ENCODE measurements at regions of chr3 and their contacts with region 1.

Region 1: DNA sequence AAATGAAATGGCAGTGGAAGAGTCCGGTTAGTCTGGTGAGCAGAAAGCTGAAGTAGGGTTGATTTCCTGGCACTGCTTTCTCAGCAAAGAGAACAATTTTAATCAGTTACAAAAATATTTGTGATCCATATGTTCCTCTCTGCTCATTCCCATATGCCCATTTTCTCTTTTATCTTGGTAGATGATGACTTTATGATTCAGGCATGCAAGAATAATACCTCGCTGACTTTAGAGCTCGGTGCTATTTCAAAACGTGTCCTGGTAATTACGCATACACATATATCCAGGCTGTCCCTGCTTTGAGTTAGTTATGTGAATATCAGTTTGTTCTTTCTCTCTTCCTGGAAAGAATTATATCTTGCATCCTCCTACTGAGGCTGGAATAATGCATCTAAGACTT is 38.5 kb downstream of the ARPP21 start:
- DNase-seq: no peak
- H3K4me3 ChIP-seq: no peak overlapping the region
- H3K27ac ChIP-seq: no peak overlapping the region
- H3K4me1 ChIP-seq: no peaks in the 10 kb centered on the region
- H3K27me3 ChIP-seq: peaks cover 0 to 5% of the 10 kb centered on the region in 2 donors
- CTCF ChIP-seq: no peak
- POLR2A ChIP-seq: no peak

Region 2: GRCh38 chr3:34405159-34405558 is 1272.6 kb before region 1 on chr3:
- intact Hi-C with region 1: loop called (anchors 5 kb)
- DNase-seq: no peak
- H3K4me3 ChIP-seq: no peak overlapping the region
- H3K27ac ChIP-seq: no peak overlapping the region
- H3K4me1 ChIP-seq: no peaks in the 10 kb centered on the region
- H3K27me3 ChIP-seq: no peaks in the 10 kb centered on the region
- CTCF ChIP-seq: no peak
- POLR2A ChIP-seq: no peak

Region 3: DNA sequence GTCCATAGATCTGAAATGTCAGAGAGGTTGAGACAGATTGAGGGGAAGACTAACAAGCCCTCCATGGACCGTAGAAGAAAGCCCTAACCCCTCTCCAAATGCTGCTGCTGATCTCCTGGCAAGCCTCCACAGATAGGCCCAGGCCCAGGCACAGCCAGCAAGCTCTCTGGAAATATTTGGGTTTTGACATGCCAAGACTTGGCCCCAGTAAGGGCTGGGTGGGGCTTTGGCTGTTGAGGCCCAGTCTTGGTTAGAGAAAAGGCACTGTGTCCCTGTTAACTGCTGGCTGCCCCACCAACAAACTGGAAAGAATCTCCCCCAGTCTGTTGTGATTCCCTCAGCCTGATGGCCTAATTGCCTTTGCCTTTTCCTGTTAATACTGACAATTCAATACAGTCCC is 1975.1 kb after region 1 on chr3:
- intact Hi-C with region 1: no loop called
- DNase-seq: no peak
- H3K4me3 ChIP-seq: no peak overlapping the region
- H3K27ac ChIP-seq: peak overlapping the region; percentile 45 to 76
- H3K4me1 ChIP-seq: peaks cover 0 to 2% of the 10 kb centered on the region in 2 donors
- H3K27me3 ChIP-seq: no peaks in the 10 kb centered on the region
- CTCF ChIP-seq: no peak
- POLR2A ChIP-seq: no peak